Heart left ventricle (tissue), 16 donors: ENCODE measurements at regions of chr3 and their contacts with region 1.

Region 1: DNA sequence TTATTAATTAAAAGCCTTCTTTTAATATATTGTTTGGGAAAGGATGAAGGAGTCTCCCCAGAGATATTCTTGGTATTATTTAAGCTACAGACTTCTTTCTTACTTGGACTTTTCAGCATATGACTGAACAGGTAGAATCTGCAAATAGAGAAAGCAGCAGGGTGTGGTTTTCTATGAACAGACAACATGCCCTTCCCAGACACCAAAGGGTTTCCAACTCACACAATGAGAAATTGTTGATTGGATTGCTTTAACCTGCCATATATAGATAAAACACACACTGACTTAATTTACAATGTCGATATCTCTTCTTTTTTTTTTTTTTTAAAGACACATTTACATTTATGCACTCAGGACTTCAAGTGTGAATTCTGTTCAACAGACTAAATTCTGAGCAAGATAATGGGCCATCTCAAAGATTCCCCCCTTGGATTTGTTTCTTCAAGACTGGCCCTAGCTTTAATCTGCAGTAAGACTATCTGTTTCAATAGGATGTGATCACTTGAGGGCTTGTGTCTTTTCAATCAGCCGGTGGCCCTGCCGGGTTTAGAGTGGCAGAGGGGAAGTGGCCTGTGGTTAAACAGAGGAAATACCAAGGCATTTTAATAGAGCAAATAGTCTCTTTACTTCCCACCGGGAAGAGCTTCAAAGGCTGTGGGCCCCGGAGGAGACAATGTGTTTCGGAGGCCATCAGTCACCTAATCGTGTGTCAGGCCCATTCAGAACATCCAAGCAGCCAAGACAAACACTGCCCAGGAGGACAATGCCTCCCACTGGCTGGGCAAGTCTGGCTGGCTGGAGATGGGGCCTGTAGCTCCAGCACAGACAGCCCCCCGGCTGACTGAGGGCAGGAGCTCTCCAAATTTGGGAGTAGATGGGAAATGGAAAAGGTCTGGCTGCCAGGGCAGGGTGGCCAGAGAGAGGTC is 6.1 kb downstream of the IL17RD start:
- DNase-seq: no peak
- ATAC-seq: no peak
- H3K4me3 ChIP-seq: no peak overlapping the region
- H3K27ac ChIP-seq: peak overlapping the region in 10 of 12 donors; percentile 13 to 75 (median 64)
- H3K4me1 ChIP-seq: peaks cover 5 to 58% (median 40%) of the 10 kb centered on the region in 12 donors
- H3K27me3 ChIP-seq: peaks cover 0 to 24% (median 0%) of the 10 kb centered on the region in 9 donors
- CTCF ChIP-seq: no peak
- POLR2A ChIP-seq: no peak

Region 2: GRCh38 chr3:56862352-56863074 is 296.6 kb before region 1 on chr3:
- intact Hi-C with region 1: no loop called
- DNase-seq: no peak
- ATAC-seq: peak in 1 of 4 donors; percentile 38
- H3K4me3 ChIP-seq: no peak overlapping the region
- H3K27ac ChIP-seq: no peak overlapping the region
- H3K4me1 ChIP-seq: peaks cover 0 to 18% (median 2%) of the 10 kb centered on the region in 12 donors
- H3K27me3 ChIP-seq: no peaks in the 10 kb centered on the region
- CTCF ChIP-seq: no peak
- POLR2A ChIP-seq: no peak

Region 3: GRCh38 chr3:57041604-57042086 is 117.4 kb before region 1 on chr3:
- intact Hi-C with region 1: no loop called
- DNase-seq: peak in 3 of 5 donors; percentile 14 to 67 (median 30)
- ATAC-seq: peak; percentile 47 to 76 (median 60)
- H3K4me3 ChIP-seq: no peak overlapping the region
- H3K27ac ChIP-seq: peak overlapping the region in 3 of 12 donors; percentile 22 to 34 (median 25)
- H3K4me1 ChIP-seq: peaks cover 0 to 30% (median 9%) of the 10 kb centered on the region in 12 donors
- H3K27me3 ChIP-seq: no peaks in the 10 kb centered on the region
- CTCF ChIP-seq: no peak
- POLR2A ChIP-seq: no peak

Region 4: GRCh38 chr3:57120040-57120439 is 39.0 kb before region 1 on chr3:
- intact Hi-C with region 1: loop called in 2 of 10 experiments (anchors 5 kb)
- DNase-seq: no peak
- ATAC-seq: peak in 2 of 4 donors; percentile 17 to 50
- H3K4me3 ChIP-seq: no peak overlapping the region
- H3K27ac ChIP-seq: peak overlapping the region in 1 of 12 donors; percentile 71
- H3K4me1 ChIP-seq: peaks cover 0 to 15% (median 5%) of the 10 kb centered on the region in 12 donors
- H3K27me3 ChIP-seq: no peaks in the 10 kb centered on the region
- CTCF ChIP-seq: no peak
- POLR2A ChIP-seq: no peak

Region 5: DNA sequence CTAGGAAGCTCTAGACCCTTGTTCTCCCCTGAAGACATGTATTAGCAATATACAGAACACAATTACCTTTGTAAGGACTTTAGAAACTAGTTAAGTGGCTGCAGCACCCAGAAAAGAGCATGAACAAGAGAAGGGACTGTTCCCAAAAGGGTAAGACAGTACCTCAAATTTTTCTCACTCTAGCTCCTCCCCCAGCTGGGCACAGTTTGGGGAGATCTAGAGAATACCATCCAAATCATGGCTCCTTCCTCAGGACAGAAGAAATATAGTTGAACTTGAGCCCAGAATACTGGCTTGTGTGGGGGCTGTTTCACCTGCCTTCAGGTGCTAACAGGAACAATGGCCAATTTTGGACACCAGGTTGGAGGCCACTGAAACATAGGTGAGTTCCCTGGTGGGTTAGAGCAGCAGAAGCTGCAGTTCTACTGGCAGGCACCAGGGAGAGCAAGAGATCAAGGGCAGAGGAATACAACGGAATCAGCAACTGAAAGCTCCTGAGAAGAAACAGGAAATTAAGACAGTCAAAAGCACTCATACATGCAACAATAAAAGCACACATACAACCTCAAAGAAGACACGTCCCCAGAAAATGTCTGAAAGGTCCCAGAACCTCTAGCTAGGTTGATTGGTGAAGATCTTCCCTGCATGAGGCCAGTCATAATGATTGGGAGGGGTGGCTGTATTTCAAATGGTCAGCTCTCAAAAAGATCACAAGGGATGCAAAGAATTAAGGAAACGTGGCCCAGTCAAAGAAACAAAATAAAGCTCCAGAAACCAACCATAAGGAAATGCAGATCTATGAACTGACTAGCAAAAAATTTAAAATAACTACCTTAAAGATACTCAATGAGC is 238.3 kb after region 1 on chr3:
- intact Hi-C with region 1: no loop called
- DNase-seq: peak in 3 of 5 donors; percentile 18 to 29 (median 23)
- ATAC-seq: peak in 3 of 4 donors; percentile 66 to 85 (median 75)
- H3K4me3 ChIP-seq: no peak overlapping the region
- H3K27ac ChIP-seq: no peak overlapping the region
- H3K4me1 ChIP-seq: peaks cover 0 to 4% (median 0%) of the 10 kb centered on the region in 12 donors
- H3K27me3 ChIP-seq: no peaks in the 10 kb centered on the region
- CTCF ChIP-seq: peak; percentile 58 to 79 (median 73)
- POLR2A ChIP-seq: no peak

Region 6: DNA sequence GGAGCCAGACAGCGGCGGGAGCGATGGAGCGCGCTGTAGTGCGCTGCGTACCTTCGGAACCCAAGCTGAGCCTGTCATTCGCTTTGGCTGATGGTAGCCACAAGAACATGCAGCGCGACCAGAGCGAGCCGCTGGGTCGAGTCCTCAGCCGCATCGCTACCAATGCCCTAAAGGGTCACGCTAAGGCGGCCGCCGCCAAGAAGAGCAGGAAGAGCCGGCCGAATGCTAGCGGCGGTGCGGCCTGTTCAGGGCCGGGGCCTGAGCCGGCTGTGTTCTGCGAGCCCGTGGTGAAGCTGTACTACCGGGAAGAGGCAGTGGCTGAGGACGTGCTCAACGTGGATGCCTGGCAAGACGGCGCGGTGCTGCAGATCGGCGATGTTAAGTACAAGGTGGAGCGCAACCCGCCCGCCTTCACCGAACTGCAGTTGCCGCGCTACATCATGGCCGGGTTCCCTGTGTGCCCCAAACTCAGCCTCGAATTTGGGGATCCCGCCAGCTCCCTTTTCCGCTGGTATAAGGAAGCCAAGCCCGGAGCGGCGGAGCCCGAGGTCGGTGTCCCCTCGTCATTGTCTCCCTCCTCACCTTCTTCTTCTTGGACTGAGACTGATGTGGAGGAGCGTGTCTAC is 397.5 kb after region 1 on chr3:
- intact Hi-C with region 1: no loop called
- DNase-seq: peak in 3 of 5 donors; percentile 40 to 66 (median 41)
- ATAC-seq: peak; percentile 8 to 58 (median 54)
- H3K4me3 ChIP-seq: peak overlapping the region; percentile 46 to 96 (median 88)
- H3K27ac ChIP-seq: peak overlapping the region; percentile 60 to 94 (median 90)
- H3K4me1 ChIP-seq: peaks cover 0 to 48% (median 27%) of the 10 kb centered on the region in 12 donors
- H3K27me3 ChIP-seq: no peaks in the 10 kb centered on the region
- CTCF ChIP-seq: no peak
- POLR2A ChIP-seq: no peak